ENCODE measurements at regions of chr16 and their contacts with region 1.

Region 1: GRCh38 chr16:10964039-10964890 is 19.9 kb downstream of the CLEC16A start:
- DNase-seq: peak; percentile 66 to 86
- H3K4me3 ChIP-seq: no peak overlapping the region
- H3K4me1 ChIP-seq: peaks cover 2% of the 10 kb centered on the region; the same call in 1 of the 2 replicates
- H3K27me3 ChIP-seq: no peaks in the 10 kb centered on the region

Region 2: GRCh38 chr16:11263737-11264136 is 299.5 kb after region 1 on chr16:
- in situ Hi-C with region 1: loop called (anchors 5 kb)
- DNase-seq: no peak
- H3K4me3 ChIP-seq: no peak overlapping the region
- H3K4me1 ChIP-seq: no peaks in the 10 kb centered on the region
- H3K27me3 ChIP-seq: no peaks in the 10 kb centered on the region

Region 3: DNA sequence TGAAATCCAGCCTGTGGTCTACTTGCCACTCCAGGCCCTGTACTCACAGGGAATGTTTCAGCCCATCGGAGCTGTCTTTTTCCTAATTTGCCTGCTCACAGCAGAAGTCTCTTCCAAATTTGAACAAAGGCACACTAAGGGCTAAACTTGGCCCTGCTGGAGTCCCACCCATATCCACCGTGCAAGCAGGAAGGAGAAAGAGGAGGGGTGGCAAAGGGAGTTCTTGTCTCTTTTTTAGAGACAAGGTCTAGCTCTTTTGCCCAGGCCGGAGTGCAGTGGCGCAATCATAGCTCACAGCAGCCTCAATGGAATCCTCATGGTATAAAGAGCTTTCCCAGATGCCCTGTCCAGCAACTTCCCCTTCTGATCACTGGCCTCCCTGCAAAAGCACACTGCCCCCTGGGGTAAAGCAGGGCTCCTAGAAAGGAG is 319.6 kb after region 1 on chr16:
- in situ Hi-C with region 1: no loop called
- DNase-seq: no peak
- H3K4me3 ChIP-seq: no peak overlapping the region
- H3K4me1 ChIP-seq: no peaks in the 10 kb centered on the region
- H3K27me3 ChIP-seq: peaks cover 4% of the 10 kb centered on the region; the same call in 1 of the 2 replicates

Region 4: GRCh38 chr16:11361701-11362451 is 397.6 kb after region 1 on chr16:
- in situ Hi-C with region 1: loop called (anchors 10 kb)
- DNase-seq: no peak
- H3K4me3 ChIP-seq: no peak overlapping the region
- H3K4me1 ChIP-seq: peaks cover 3% of the 10 kb centered on the region; the same call in 1 of the 2 replicates
- H3K27me3 ChIP-seq: no peaks in the 10 kb centered on the region; the same call in 1 of the 2 replicates

Region 5: GRCh38 chr16:11506741-11507305 is 542.6 kb after region 1 on chr16:
- in situ Hi-C with region 1: loop called (anchors 25 kb)
- DNase-seq: no peak
- H3K4me3 ChIP-seq: no peak overlapping the region
- H3K4me1 ChIP-seq: no peaks in the 10 kb centered on the region
- H3K27me3 ChIP-seq: no peaks in the 10 kb centered on the region

Region 6: DNA sequence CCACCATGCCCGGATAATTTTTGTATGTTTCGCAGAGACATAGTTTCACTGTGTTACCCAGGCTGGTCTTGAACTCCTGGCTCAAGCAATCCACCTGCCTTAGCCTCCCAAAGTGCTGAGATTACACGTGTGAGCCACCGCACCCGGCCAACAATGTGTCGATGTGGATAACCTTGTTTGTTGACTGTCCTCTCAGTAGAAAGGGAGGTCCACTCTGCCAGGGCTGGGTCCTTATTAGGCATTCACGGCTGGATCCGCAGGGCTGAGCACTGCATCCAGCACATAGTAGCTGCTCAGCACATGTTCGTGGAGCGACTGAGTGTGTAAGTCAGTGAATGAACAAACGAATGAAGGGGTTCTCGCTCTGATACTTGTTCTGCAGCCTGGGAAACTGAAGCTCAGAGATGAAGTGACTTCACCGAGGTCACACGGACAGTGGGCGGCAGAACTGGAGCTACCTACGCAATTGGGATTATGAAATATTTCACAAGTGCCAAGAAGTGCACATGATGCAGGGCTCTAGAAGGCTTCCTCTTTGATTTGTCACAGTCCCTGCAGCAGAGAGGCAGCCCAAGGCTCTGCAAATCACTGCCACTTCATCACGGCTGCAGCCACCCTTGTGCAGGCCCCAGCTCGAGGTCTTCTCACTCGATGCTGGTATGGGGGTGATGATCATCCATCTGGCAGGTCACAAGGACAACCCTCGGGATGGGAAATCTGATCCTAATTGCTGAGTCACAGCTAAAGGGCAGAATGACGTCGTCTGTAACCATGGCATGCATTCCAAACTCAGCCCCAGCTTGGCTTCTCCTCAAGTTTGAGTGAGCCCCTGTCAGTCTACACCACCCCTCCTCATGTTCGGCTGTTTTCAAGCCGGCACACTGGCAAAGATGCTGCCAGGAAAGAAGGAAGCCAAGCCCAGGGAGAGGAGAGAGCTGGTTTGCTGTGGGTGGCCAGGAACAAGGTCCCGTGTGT is 675.9 kb after region 1 on chr16:
- in situ Hi-C with region 1: loop called (anchors 25 kb)
- DNase-seq: no peak
- H3K4me3 ChIP-seq: no peak overlapping the region
- H3K4me1 ChIP-seq: no peaks in the 10 kb centered on the region
- H3K27me3 ChIP-seq: no peaks in the 10 kb centered on the region